Activated CD4-positive, alpha-beta memory T cell treated with anti-CD3 and anti-CD28 coated beads for 36 hours (primary cell): ENCODE measurements at regions of chr11 and their contacts with region 1.

Region 1: GRCh38 chr11:13384908-13385640 is 77.9 kb downstream of the BTBD10 start:
- DNase-seq: peak; percentile 34
- H3K4me3 Mint-ChIP-seq: no peak overlapping the region
- H3K27ac Mint-ChIP-seq: peak overlapping the region; percentile 40
- H3K4me1 Mint-ChIP-seq: no peaks in the 10 kb centered on the region
- H3K27me3 Mint-ChIP-seq: no peaks in the 10 kb centered on the region

Region 2: DNA sequence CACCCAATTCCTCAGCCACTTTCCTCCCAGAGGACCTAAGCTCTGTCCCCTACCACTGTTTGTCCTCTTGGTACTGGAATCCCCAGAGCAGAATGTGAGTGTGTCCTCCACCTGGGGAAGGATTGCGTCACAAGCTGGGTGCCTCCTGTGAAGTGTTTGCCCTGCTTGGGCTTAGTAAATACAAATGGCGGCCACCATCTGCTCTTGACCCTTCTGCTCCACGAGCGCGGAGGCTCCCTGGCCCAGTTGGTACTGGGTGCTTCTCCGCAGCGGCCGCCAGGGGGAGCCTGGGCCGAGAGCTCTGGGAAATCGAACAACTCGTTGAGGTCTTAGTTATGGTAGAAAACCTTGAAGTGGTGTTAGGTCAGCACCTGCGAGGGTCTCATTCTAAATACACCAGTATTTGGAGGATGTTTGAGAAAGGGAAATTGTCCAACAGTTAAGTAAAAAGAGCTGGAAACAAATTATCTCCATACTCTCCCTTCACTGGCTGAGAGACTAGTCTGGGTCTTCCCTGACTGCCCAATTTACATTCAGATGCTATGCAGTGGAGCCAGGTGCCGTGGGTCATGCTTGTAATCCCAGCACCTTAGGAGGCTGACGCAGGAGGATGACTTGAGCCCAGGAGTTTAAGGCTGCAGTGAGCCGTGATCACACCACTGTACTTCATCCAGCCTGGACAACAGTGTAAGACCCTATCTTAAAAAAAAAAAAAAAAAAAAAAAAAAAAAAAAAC is 785.5 kb before region 1 on chr11:
- CTCF ChIA-PET with region 1: no interaction called
- POLR2A ChIA-PET with region 1: no interaction called
- intact Hi-C with region 1: no loop called
- DNase-seq: peak; percentile 56
- H3K4me3 Mint-ChIP-seq: no peak overlapping the region
- H3K27ac Mint-ChIP-seq: no peak overlapping the region
- H3K4me1 Mint-ChIP-seq: peaks cover 13% of the 10 kb centered on the region
- H3K27me3 Mint-ChIP-seq: peaks cover 19% of the 10 kb centered on the region

Region 3: GRCh38 chr11:13183094-13183825 is 201.8 kb before region 1 on chr11:
- CTCF ChIA-PET with region 1: no interaction called
- POLR2A ChIA-PET with region 1: no interaction called
- intact Hi-C with region 1: loop called (anchors 5 kb)
- DNase-seq: no peak
- H3K4me3 Mint-ChIP-seq: no peak overlapping the region
- H3K27ac Mint-ChIP-seq: no peak overlapping the region
- H3K4me1 Mint-ChIP-seq: peaks cover 7% of the 10 kb centered on the region
- H3K27me3 Mint-ChIP-seq: peaks cover 15% of the 10 kb centered on the region

Region 4: GRCh38 chr11:13462901-13463778 is 78.1 kb after region 1 on chr11 and contains the start of gene BTBD10:
- CTCF ChIA-PET with region 1: interaction called, 7 read pairs
- POLR2A ChIA-PET with region 1: no interaction called
- intact Hi-C with region 1: loop called (anchors 2 kb)
- DNase-seq: peak; percentile 95
- H3K4me3 Mint-ChIP-seq: peak within 1 kb of the TSS; percentile 98
- H3K27ac Mint-ChIP-seq: peak within 1 kb of the TSS; percentile 95
- H3K4me1 Mint-ChIP-seq: peaks cover 35% of the 10 kb centered on the region
- H3K27me3 Mint-ChIP-seq: no peaks in the 10 kb centered on the region
- total RNA-seq, gene BTBD10: 22.3 to 24.3 TPM

Region 5: GRCh38 chr11:13896175-13896980 is 511.3 kb after region 1 on chr11:
- CTCF ChIA-PET with region 1: no interaction called
- POLR2A ChIA-PET with region 1: no interaction called
- intact Hi-C with region 1: no loop called
- DNase-seq: no peak
- H3K4me3 Mint-ChIP-seq: no peak overlapping the region
- H3K27ac Mint-ChIP-seq: no peak overlapping the region
- H3K4me1 Mint-ChIP-seq: peaks cover 5% of the 10 kb centered on the region
- H3K27me3 Mint-ChIP-seq: peaks cover 2% of the 10 kb centered on the region